AG04450 (cell line): ENCODE measurements at regions of chr11 and their contacts with region 1.

Region 1: DNA sequence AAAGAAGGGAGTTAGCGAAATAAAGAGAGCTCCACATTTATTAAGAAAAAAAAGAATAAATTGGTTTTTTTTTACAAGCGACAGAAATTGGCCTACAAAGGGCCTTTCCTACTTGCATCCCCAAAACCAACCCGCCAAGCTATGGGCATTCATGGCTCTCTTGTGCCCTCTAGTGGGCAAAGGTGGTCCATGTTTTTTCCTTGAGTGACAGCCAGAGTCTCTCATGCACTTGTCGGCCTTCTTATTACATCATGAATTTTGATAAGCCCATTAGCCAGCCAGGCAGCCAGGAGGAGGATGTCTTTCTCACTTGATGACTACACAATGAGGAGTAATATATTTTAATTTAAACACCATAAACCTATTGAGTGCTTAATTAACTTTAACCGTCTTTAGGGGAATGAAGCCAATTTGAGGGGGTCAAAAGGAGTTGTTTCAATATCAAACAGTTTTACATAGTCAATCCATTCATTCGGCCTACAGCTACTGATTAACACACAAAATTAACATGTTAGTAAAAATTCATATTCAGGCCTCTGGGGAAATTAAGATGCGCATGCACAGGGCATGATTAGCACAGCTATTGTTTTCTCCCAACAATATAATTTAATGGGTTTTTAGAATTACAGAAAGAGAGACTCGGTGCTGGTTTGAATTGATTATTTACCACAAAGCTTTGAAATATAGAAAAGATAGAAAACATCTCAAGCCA is 85.5 kb downstream of the RCN1 start:
- DNase-seq: peak; percentile 48
- H3K4me3 ChIP-seq: no peak overlapping the region
- H3K27ac ChIP-seq: no peak overlapping the region
- H3K27me3 ChIP-seq: peaks cover 9% of the 10 kb centered on the region
- CTCF ChIP-seq: peak; percentile 94

Region 2: DNA sequence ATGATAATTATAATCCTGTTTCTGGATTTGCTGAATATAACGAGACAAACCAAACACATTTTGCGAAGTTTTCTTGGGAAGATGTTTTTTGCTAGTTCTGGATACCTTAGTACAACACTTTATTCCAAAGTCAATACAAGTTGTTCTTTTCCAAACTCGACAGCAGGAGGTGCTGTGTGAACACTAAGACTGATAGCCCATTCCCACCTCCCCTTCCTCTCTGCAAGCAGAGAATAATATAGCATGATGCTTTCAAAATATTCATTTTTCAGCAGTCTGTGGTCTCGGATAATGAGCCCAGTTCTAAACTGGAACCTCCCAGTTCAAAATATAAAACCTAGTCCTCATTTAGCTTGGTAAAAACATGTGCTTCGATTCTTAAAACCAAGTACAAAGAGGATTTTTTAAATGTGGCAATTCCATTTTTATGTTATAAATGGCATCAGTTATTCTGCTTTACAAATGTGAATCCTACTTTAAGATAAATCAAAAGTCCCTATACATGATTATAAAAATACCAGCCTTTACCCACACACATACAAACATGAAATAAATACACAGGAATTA is 936.0 kb before region 1 on chr11:
- CTCF ChIA-PET with region 1: interaction called, 11 read pairs
- POLR2A ChIA-PET with region 1: no interaction called
- DNase-seq: peak; percentile 1
- H3K4me3 ChIP-seq: no peak overlapping the region
- H3K27ac ChIP-seq: no peak overlapping the region
- H3K27me3 ChIP-seq: no peaks in the 10 kb centered on the region
- CTCF ChIP-seq: peak; percentile 58

Region 3: GRCh38 chr11:31641477-31642062 is 534.8 kb before region 1 on chr11:
- CTCF ChIA-PET with region 1: interaction called, 10 read pairs
- POLR2A ChIA-PET with region 1: no interaction called
- DNase-seq: no peak
- H3K4me3 ChIP-seq: no peak overlapping the region
- H3K27ac ChIP-seq: no peak overlapping the region
- H3K27me3 ChIP-seq: no peaks in the 10 kb centered on the region
- CTCF ChIP-seq: peak; percentile 72

Region 4: DNA sequence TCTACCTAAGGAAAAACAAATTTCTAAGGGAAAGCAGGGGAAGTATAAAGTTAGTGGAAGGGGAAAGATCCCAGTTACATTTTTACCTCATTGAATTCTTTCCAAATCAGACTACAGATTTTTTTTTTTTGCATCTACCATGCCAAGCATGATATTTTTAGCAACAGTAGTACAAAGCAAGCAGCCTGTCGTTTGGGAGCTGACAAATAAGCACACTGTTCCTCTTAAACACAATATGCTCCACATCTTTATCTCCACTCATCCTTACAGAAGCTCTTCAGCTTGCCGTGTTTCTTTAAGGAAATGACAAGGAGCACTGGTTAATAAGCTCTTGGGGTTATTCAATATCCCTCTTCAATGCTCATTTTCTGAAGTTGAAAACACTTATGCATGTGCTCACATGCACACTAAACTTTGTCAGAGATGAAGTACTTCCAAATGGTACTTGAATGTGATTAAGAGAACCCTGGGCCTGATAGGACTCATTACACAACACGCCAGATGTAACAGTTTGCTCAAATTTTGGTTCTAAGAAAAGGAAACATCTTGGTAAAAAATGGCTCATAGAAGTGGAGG is 419.0 kb before region 1 on chr11:
- CTCF ChIA-PET with region 1: no interaction called
- POLR2A ChIA-PET with region 1: no interaction called
- DNase-seq: no peak
- H3K4me3 ChIP-seq: no peak overlapping the region
- H3K27ac ChIP-seq: no peak overlapping the region
- H3K27me3 ChIP-seq: no peaks in the 10 kb centered on the region
- CTCF ChIP-seq: no peak

Region 5: GRCh38 chr11:32034149-32034548 is 142.2 kb before region 1 on chr11:
- CTCF ChIA-PET with region 1: interaction called, 17 read pairs
- POLR2A ChIA-PET with region 1: no interaction called
- DNase-seq: peak; percentile 79
- H3K4me3 ChIP-seq: no peak overlapping the region
- H3K27ac ChIP-seq: no peak overlapping the region
- H3K27me3 ChIP-seq: no peaks in the 10 kb centered on the region
- CTCF ChIP-seq: no peak

Region 6: DNA sequence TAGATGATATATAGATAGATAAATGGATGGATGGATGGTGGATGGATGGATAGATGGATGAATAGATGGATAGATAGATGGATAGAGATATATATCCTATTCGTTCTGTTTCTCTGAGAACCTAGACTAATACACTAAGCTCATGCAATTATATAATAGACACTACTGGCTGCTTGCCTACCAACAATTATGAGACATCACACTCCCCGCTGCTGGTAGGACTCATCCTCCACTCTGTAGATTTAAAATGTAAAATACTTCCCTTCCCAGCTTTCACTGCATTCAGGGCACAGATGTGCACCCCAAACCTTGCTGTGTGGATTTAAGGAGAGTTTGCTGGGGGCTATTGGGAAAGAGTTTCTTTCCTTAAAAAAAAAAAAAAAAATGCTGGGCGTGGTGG is 113.8 kb before region 1 on chr11:
- CTCF ChIA-PET with region 1: interaction called, 269 read pairs
- POLR2A ChIA-PET with region 1: no interaction called
- DNase-seq: no peak
- H3K4me3 ChIP-seq: no peak overlapping the region
- H3K27ac ChIP-seq: no peak overlapping the region
- H3K27me3 ChIP-seq: peaks cover 27% of the 10 kb centered on the region
- CTCF ChIP-seq: no peak

Region 7: GRCh38 chr11:32137263-32137662 is 39.1 kb before region 1 on chr11:
- CTCF ChIA-PET with region 1: interaction called, 17 read pairs
- POLR2A ChIA-PET with region 1: no interaction called
- DNase-seq: peak; percentile 89
- H3K4me3 ChIP-seq: no peak overlapping the region
- H3K27ac ChIP-seq: peak overlapping the region; percentile 85
- H3K27me3 ChIP-seq: no peaks in the 10 kb centered on the region
- CTCF ChIP-seq: no peak

Region 8: GRCh38 chr11:32297611-32298011 is 121.2 kb after region 1 on chr11:
- CTCF ChIA-PET with region 1: interaction called, 11 read pairs
- POLR2A ChIA-PET with region 1: no interaction called
- DNase-seq: no peak
- H3K4me3 ChIP-seq: no peak overlapping the region
- H3K27ac ChIP-seq: no peak overlapping the region
- H3K27me3 ChIP-seq: no peaks in the 10 kb centered on the region
- CTCF ChIP-seq: peak; percentile 40; the same call in 1 of the 2 replicates